ENCODE measurements at regions of chr11 and their contacts with region 1.

Region 1: GRCh38 chr11:31958076-31958735 is 132.7 kb upstream of the RCN1 start:
- DNase-seq: peak; percentile 47 to 97
- H3K4me3 ChIP-seq: no peak overlapping the region
- H3K27ac ChIP-seq: no peak overlapping the region
- H3K4me1 ChIP-seq: peaks cover 0 to 5% (median 0%) of the 10 kb centered on the region in 4 experiments; a peak in 1 of 7 replicates
- H3K27me3 ChIP-seq: no peaks in the 10 kb centered on the region; a peak in 1 of 7 replicates
- CTCF ChIP-seq: peak; percentile 90 to 95 (median 94)
- EP300 ChIP-seq: no peak
- POLR2A ChIP-seq: no peak
- RAD21 ChIP-seq: peak; percentile 93 to 94

Region 2: DNA sequence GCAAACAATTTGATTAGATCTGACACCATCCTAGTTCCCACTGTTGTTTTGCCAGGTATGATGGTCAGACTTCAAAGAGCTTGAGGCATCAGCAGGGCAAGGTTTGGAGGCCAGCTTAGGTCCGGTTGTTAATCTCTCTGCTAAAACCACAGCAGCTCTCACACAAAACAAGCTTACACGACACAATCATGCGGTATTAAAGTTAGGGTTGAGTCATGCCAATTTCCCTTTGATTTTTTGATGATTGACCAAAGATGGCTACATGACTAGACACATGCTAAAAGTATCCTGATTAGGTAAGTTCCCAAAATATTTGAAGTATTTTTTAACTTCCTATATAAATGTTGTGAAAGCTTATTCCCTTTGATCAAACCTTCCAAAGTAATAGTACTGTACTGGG is 302.7 kb before region 1 on chr11:
- CTCF ChIA-PET with region 1: interaction called, 14 read pairs
- POLR2A ChIA-PET with region 1: no interaction called
- DNase-seq: no peak
- H3K4me3 ChIP-seq: no peak overlapping the region
- H3K27ac ChIP-seq: no peak overlapping the region
- H3K4me1 ChIP-seq: peaks cover 0 to 7% (median 1%) of the 10 kb centered on the region in 4 experiments; a peak in 2 of 7 replicates
- H3K27me3 ChIP-seq: peaks cover 0 to 1% (median 0%) of the 10 kb centered on the region in 4 experiments; a peak in 1 of 7 replicates
- CTCF ChIP-seq: no peak
- EP300 ChIP-seq: no peak
- POLR2A ChIP-seq: no peak
- RAD21 ChIP-seq: no peak

Region 3: DNA sequence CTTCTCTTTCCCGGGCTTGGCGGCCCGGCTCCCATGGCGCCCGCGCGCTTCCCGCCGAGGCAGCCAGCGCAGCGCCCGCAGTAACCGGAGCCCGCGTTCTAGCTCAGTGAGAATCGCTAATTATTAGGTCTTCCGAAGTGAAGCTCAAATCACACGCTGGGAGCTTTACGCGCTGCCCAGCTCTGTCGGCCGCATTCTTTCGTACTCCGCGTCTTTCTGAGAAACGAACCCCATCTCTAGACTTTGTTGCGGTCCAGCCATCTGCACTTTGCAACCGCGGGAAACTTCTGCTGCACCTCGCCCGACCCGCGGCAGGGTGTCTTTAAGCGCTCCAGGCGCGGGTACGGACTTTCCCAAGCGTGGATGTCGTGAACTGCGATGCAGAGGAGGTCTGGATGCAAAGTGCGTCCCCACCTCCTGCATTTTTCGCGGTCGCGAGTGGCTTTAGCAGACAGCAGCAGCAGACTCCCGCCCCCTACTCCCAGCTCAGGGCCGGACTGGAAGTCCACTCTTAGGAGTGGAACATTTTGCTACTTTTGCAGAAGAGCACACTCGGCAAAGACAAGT is 141.1 kb before region 1 on chr11:
- CTCF ChIA-PET with region 1: interaction called, 47 read pairs
- POLR2A ChIA-PET with region 1: interaction called, 3 read pairs
- DNase-seq: peak in 1 of 2 experiments; percentile 64
- H3K4me3 ChIP-seq: peak overlapping the region in 3 of 4 experiments; percentile 35 to 62 (median 45); a peak in 5 of 8 replicates
- H3K27ac ChIP-seq: no peak overlapping the region
- H3K4me1 ChIP-seq: peaks cover 3 to 70% (median 47%) of the 10 kb centered on the region in 4 experiments
- H3K27me3 ChIP-seq: peaks cover 79 to 100% (median 98%) of the 10 kb centered on the region in 4 experiments
- CTCF ChIP-seq: no peak
- EP300 ChIP-seq: no peak
- POLR2A ChIP-seq: no peak
- RAD21 ChIP-seq: no peak

Region 4: DNA sequence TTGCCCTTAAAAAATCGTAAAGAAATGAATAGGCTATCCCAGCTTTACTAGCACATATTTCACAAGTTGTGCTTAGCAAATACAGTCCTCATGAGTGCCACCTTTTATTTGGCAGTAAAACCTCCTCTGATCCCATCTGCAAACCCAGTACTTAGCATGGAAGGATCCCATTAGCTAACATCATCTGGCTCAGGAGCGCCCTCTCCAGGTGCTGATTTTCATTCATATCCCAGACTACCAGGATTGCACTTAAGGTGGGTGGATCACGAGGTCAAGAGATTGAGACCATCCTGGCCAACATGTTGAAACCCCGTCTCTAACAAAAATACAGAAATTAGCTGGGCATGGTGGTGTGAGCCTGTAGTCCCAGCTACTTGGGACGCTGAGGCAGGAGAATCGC is 71.0 kb before region 1 on chr11:
- CTCF ChIA-PET with region 1: interaction called, 23 read pairs
- POLR2A ChIA-PET with region 1: no interaction called
- DNase-seq: peak in 1 of 2 experiments; percentile 89
- H3K4me3 ChIP-seq: no peak overlapping the region
- H3K27ac ChIP-seq: no peak overlapping the region
- H3K4me1 ChIP-seq: peaks cover 3 to 15% (median 6%) of the 10 kb centered on the region in 4 experiments; a peak in 5 of 7 replicates
- H3K27me3 ChIP-seq: no peaks in the 10 kb centered on the region
- CTCF ChIP-seq: peak; percentile 32 to 69 (median 60)
- EP300 ChIP-seq: no peak
- POLR2A ChIP-seq: no peak
- RAD21 ChIP-seq: peak; percentile 58 to 68; a peak in 3 of 4 replicates

Region 5: GRCh38 chr11:31943056-31943780 is 15.0 kb before region 1 on chr11:
- CTCF ChIA-PET with region 1: interaction called, 71 read pairs
- POLR2A ChIA-PET with region 1: no interaction called
- DNase-seq: no peak
- H3K4me3 ChIP-seq: no peak overlapping the region
- H3K27ac ChIP-seq: no peak overlapping the region
- H3K4me1 ChIP-seq: peaks cover 0 to 2% (median 0%) of the 10 kb centered on the region in 4 experiments; a peak in 1 of 7 replicates
- H3K27me3 ChIP-seq: no peaks in the 10 kb centered on the region
- CTCF ChIP-seq: peak in 2 of 3 experiments; percentile 5 to 9; a peak in 2 of 4 replicates
- EP300 ChIP-seq: no peak
- POLR2A ChIP-seq: no peak
- RAD21 ChIP-seq: peak; percentile 24 to 29; a peak in 3 of 4 replicates

Region 6: GRCh38 chr11:31987118-31988005 is 29.2 kb after region 1 on chr11:
- CTCF ChIA-PET with region 1: interaction called, 39 read pairs
- POLR2A ChIA-PET with region 1: no interaction called
- DNase-seq: peak; percentile 1 to 80
- H3K4me3 ChIP-seq: peak overlapping the region; percentile 14 to 64 (median 44)
- H3K27ac ChIP-seq: no peak overlapping the region
- H3K4me1 ChIP-seq: peaks cover 0 to 3% (median 1%) of the 10 kb centered on the region in 4 experiments; a peak in 3 of 7 replicates
- H3K27me3 ChIP-seq: peaks cover 0 to 9% (median 8%) of the 10 kb centered on the region in 4 experiments; a peak in 6 of 7 replicates
- CTCF ChIP-seq: no peak
- EP300 ChIP-seq: no peak
- POLR2A ChIP-seq: no peak
- RAD21 ChIP-seq: peak in 1 of 2 experiments; percentile 2; a peak in 2 of 4 replicates

Measured in H1 (cell line).